CD4-positive, alpha-beta T cell (primary cell): ENCODE measurements at regions of chr14 and their contacts with region 1.

Region 1: DNA sequence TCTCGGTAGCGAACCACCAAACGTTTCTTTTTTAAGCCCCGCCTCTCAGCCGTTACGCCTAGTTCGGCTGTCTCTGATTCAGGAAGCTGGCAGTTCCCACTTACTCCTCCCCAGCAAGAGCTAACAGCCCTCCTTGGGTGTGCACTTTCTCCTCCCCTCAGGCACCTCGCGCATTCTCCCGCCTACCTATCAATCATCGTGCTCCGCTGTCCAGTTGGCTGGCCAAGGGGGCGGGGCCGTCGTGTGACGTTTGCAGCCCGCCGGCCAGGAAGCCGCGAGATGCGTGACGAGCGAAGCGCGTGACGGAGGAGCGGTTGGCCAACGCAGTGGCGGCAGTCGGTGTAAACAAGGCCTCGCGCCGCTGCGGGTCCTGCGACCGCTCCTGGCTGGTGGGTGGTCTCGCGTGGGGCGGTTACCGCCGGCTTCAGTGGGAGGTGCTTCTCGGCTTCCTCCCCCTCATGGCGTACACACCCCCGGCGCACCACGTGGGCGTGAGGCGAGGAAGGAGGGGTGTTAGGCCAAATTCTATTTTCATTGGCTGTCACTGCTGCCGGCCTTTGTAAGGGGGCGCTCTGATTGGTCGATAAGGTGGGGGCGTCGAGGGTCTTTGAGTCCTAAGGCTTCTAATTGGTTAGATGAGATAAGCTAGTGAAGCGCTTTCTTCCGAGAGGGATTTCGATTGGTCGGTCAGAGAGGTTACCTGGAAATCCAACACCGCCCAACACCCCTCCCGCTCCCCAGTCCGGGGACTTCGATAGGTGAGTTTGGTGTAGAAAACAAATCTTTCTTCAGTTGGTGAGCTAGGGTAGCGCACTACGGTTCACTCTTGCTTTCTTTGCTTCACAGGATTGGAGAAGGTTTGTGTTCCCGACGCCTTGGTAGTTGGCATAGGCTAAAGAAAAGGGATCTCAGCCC is at the starts of genes DCAF11 and NRL:
- DNase-seq: peak; percentile 95 to 100 (median 98)
- ATAC-seq: peak; percentile 81
- H3K4me3 ChIP-seq: peak within 1 kb of the TSS; percentile 77
- H3K4me3 Mint-ChIP-seq: peak within 1 kb of the TSS; percentile 98
- H3K27ac ChIP-seq: peak within 1 kb of the TSS; percentile 98 to 99
- H3K27ac Mint-ChIP-seq: peak within 1 kb of the TSS; percentile 98
- H3K4me1 ChIP-seq: peaks cover 42% of the 10 kb centered on the region
- H3K4me1 Mint-ChIP-seq: peaks cover 35% of the 10 kb centered on the region
- H3K27me3 ChIP-seq: no peaks in the 10 kb centered on the region
- H3K27me3 Mint-ChIP-seq: no peaks in the 10 kb centered on the region
- CTCF ChIP-seq: no peak
- total RNA-seq, gene DCAF11: 74.8 to 75.3 TPM
- total RNA-seq, gene NRL: 1.6 to 1.9 TPM

Region 2: GRCh38 chr14:23320774-23321571 is 793.8 kb before region 1 on chr14 and contains the start of gene PABPN1:
- CTCF ChIA-PET with region 1: no interaction called
- POLR2A ChIA-PET with region 1: interaction called, 10 read pairs
- intact Hi-C with region 1: no loop called
- DNase-seq: peak; percentile 93 to 100 (median 96)
- ATAC-seq: peak; percentile 85
- H3K4me3 ChIP-seq: peak within 1 kb of the TSS; percentile 87
- H3K4me3 Mint-ChIP-seq: peak within 1 kb of the TSS; percentile 94
- H3K27ac ChIP-seq: peak within 1 kb of the TSS; percentile 92 to 96
- H3K27ac Mint-ChIP-seq: peak within 1 kb of the TSS; percentile 92
- H3K4me1 ChIP-seq: peaks cover 29% of the 10 kb centered on the region
- H3K4me1 Mint-ChIP-seq: peaks cover 35% of the 10 kb centered on the region
- H3K27me3 ChIP-seq: no peaks in the 10 kb centered on the region
- H3K27me3 Mint-ChIP-seq: no peaks in the 10 kb centered on the region
- CTCF ChIP-seq: no peak
- total RNA-seq, gene PABPN1: 188 to 195 TPM

Region 3: GRCh38 chr14:23910101-23910875 is 204.5 kb before region 1 on chr14:
- CTCF ChIA-PET with region 1: no interaction called
- POLR2A ChIA-PET with region 1: no interaction called
- intact Hi-C with region 1: no loop called
- DNase-seq: peak in 3 of 14 experiments; percentile 13 to 37 (median 34)
- ATAC-seq: no peak
- H3K4me3 ChIP-seq: no peak overlapping the region
- H3K4me3 Mint-ChIP-seq: no peak overlapping the region
- H3K27ac ChIP-seq: no peak overlapping the region
- H3K27ac Mint-ChIP-seq: no peak overlapping the region
- H3K4me1 ChIP-seq: no peaks in the 10 kb centered on the region
- H3K4me1 Mint-ChIP-seq: no peaks in the 10 kb centered on the region
- H3K27me3 ChIP-seq: peaks cover 11 to 16% of the 10 kb centered on the region in 2 experiments
- H3K27me3 Mint-ChIP-seq: peaks cover 38% of the 10 kb centered on the region
- CTCF ChIP-seq: peak; percentile 23

Region 4: GRCh38 chr14:24058260-24058950 is 56.4 kb before region 1 on chr14:
- CTCF ChIA-PET with region 1: no interaction called
- POLR2A ChIA-PET with region 1: interaction called, 11 read pairs
- intact Hi-C with region 1: loop called in 1 of 2 experiments (anchors 1 kb)
- DNase-seq: peak in 6 of 14 experiments; percentile 30 to 82 (median 48)
- ATAC-seq: peak; percentile 83
- H3K4me3 ChIP-seq: no peak overlapping the region
- H3K4me3 Mint-ChIP-seq: no peak overlapping the region
- H3K27ac ChIP-seq: no peak overlapping the region
- H3K27ac Mint-ChIP-seq: no peak overlapping the region
- H3K4me1 ChIP-seq: peaks cover 2% of the 10 kb centered on the region
- H3K4me1 Mint-ChIP-seq: no peaks in the 10 kb centered on the region
- H3K27me3 ChIP-seq: peaks cover 0 to 10% of the 10 kb centered on the region in 2 experiments
- H3K27me3 Mint-ChIP-seq: peaks cover 10% of the 10 kb centered on the region
- CTCF ChIP-seq: peak; percentile 70

Region 5: GRCh38 chr14:24129410-24129998 is 14.7 kb after region 1 on chr14:
- CTCF ChIA-PET with region 1: no interaction called
- POLR2A ChIA-PET with region 1: interaction called, 296 read pairs
- intact Hi-C with region 1: no loop called
- DNase-seq: no peak
- ATAC-seq: no peak
- H3K4me3 ChIP-seq: no peak overlapping the region
- H3K4me3 Mint-ChIP-seq: no peak overlapping the region
- H3K27ac ChIP-seq: no peak overlapping the region
- H3K27ac Mint-ChIP-seq: no peak overlapping the region
- H3K4me1 ChIP-seq: peaks cover 18% of the 10 kb centered on the region
- H3K4me1 Mint-ChIP-seq: peaks cover 25% of the 10 kb centered on the region
- H3K27me3 ChIP-seq: no peaks in the 10 kb centered on the region
- H3K27me3 Mint-ChIP-seq: no peaks in the 10 kb centered on the region
- CTCF ChIP-seq: no peak

Region 6: DNA sequence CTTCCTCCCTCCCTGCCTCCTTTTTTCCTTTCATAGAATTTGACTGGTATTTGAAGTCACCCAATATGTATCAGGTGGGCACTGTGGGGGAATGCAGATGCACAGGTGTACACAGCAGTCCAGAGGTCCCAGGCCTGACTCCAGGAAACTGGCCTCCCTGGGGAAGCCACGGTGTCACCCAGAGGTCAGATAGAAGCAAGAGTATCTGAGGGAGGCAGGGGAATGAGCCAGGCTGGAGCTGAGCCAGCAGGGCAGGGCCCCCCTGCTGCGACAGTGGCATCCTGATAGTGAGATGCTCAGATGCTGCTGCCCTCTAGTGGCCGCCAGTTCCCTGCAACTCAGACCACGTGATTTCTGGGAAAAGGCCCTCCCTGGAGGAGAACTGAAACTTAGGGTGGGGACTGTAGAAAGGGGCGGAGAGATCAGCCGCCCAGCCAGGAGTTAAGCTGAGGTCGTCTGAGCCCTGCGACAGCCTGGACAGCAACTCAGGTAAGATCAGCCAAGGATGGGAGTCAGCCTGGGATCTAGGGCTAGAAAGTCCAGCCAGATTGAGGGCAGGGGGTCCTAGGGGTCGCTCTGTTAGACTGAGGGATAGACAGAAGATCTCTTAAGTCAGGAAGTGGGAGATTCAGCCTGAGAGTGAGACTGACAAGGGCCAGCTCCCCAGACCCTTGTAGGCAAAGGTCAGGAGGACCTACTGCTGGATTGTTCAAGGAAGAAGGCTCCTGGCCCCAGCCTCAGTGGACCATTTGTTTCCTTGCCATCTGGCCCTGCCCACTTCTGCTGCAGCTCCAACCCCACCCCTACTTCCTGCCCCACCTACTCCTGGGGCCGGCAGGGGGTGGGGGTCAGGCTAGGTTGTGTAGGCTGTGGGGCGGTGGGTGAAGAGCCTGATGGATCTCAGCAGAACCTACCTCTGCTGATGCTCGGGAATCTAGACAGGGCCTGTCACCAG is 46.3 kb after region 1 on chr14 and contains the start of gene IRF9:
- CTCF ChIA-PET with region 1: interaction called, 28 read pairs
- POLR2A ChIA-PET with region 1: interaction called, 137 read pairs
- intact Hi-C with region 1: loop called (anchors 1 to 2 kb)
- DNase-seq: peak; percentile 94 to 100 (median 98)
- ATAC-seq: peak; percentile 84
- H3K4me3 ChIP-seq: peak within 1 kb of the TSS; percentile 95
- H3K4me3 Mint-ChIP-seq: peak within 1 kb of the TSS; percentile 95
- H3K27ac ChIP-seq: peak within 1 kb of the TSS; percentile 97 to 98
- H3K27ac Mint-ChIP-seq: peak within 1 kb of the TSS; percentile 98
- H3K4me1 ChIP-seq: peaks cover 52% of the 10 kb centered on the region
- H3K4me1 Mint-ChIP-seq: peaks cover 57% of the 10 kb centered on the region
- H3K27me3 ChIP-seq: no peaks in the 10 kb centered on the region
- H3K27me3 Mint-ChIP-seq: no peaks in the 10 kb centered on the region
- CTCF ChIP-seq: peak; percentile 84
- total RNA-seq, gene IRF9: 248 to 262 TPM

Region 7: DNA sequence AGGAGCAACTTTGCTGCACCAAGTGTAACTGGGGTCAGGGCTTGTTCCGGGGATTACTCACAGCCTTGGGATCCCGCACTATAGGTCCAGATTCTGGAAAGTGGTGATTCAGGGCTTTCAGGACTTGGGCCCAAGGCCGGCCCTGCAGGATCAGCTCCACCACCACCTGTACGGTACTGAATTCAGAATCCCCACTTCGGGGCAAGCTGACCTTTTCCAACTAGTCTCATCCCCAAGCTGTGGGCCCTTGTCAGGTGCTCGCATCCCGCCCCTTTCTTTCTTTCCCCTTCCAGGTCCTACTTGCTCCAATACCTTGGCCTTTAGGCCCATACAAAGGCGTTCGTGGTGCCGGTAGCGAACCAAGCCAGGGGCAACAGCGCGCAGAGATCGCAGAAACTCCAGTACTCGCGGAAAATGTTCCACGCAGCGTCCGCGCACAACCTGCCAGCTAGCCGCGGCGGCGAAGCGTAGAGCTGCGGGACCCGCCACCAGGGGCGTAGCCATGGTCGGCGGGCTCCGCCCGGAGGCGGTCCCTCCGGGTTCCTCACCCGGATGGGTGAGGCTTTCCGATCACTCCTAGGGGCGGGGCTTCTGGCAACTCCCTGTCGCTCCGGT is 127.1 kb after region 1 on chr14:
- CTCF ChIA-PET with region 1: no interaction called
- POLR2A ChIA-PET with region 1: interaction called, 49 read pairs
- intact Hi-C with region 1: loop called in 1 of 2 experiments (anchors 1 kb)
- DNase-seq: peak; percentile 85 to 97 (median 92)
- ATAC-seq: peak; percentile 80
- H3K4me3 ChIP-seq: peak overlapping the region; percentile 93
- H3K4me3 Mint-ChIP-seq: peak overlapping the region; percentile 99
- H3K27ac ChIP-seq: peak overlapping the region; percentile 97 to 100
- H3K27ac Mint-ChIP-seq: peak overlapping the region; percentile 100
- H3K4me1 ChIP-seq: peaks cover 63% of the 10 kb centered on the region
- H3K4me1 Mint-ChIP-seq: peaks cover 69% of the 10 kb centered on the region
- H3K27me3 ChIP-seq: no peaks in the 10 kb centered on the region
- H3K27me3 Mint-ChIP-seq: no peaks in the 10 kb centered on the region
- CTCF ChIP-seq: no peak